Esophagus muscularis mucosa (tissue), 4 donors: ENCODE measurements at regions of chr3 and their contacts with region 1.

Region 1: DNA sequence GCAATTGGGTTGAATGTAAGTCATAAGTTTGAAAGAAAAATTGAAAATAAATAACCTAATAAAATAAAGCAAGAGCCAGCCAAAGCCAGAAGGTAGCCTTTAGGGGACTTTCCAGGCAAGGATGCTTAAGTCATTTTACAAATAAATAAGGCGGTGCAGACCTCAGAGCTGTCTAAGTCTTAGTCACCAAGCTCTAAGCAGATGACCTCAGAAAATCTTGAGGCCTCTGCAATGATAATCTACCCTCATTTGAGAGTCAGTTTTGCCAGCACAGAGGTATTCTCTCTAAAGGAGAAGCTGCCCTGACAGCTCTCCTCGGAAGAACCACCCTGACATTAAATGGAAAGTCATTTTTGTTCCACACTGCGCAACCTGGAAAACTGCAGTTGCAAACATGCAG is 113.9 kb downstream of the OXNAD1 start:
- DNase-seq: no peak
- H3K4me3 ChIP-seq: no peak overlapping the region
- H3K27ac ChIP-seq: peak overlapping the region; percentile 82 to 89 (median 84)
- H3K4me1 ChIP-seq: peaks cover 42 to 71% (median 55%) of the 10 kb centered on the region in 4 donors
- H3K27me3 ChIP-seq: no peaks in the 10 kb centered on the region
- CTCF ChIP-seq: no peak
- EP300 ChIP-seq: no peak
- POLR2A ChIP-seq: no peak

Region 2: GRCh38 chr3:16329036-16329825 is 49.7 kb before region 1 on chr3:
- intact Hi-C with region 1: no loop called
- DNase-seq: no peak
- H3K4me3 ChIP-seq: no peak overlapping the region
- H3K27ac ChIP-seq: peak overlapping the region; percentile 27 to 75 (median 72)
- H3K4me1 ChIP-seq: peaks cover 6 to 71% (median 46%) of the 10 kb centered on the region in 4 donors
- H3K27me3 ChIP-seq: no peaks in the 10 kb centered on the region
- CTCF ChIP-seq: no peak
- EP300 ChIP-seq: no peak
- POLR2A ChIP-seq: no peak

Region 3: DNA sequence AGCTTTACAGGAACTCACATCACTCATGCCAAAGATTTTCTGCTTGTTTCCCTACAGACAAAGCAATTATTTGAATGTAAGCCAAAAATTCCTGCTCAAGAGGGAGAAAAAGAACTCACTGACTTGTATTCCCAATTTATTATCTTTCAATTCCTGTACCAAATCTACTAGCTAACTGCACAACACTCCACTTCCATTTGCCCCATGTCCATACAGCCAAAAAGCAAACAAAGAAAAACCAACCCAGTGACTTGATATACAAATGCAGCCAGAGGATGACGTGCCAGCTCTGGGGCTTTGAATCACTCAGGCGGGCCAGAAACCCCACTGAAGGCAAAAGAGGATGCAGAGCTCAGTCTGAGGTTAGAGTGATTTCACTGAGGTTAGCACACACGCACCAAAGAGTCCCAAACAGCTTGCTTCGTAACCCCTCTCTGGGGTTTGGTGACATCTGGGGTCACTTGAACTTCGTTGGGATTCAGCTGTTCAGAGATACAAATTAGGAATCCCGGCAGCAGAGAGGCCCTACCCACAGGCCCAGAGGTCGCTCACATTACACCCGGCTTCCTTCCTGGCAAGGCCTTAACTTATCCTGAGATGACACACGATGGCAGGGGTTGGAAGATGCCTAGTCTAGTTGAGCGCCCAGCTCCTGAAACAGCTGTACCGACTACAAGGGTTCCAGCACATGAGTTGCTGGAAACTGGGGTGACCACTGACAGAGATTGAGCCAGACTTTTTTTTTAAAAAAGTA is 132.9 kb after region 1 on chr3:
- intact Hi-C with region 1: loop called (anchors 10 kb)
- DNase-seq: no peak
- H3K4me3 ChIP-seq: peak overlapping the region; percentile 82 to 95 (median 88)
- H3K27ac ChIP-seq: peak overlapping the region; percentile 90 to 94 (median 92)
- H3K4me1 ChIP-seq: peaks cover 60 to 88% (median 76%) of the 10 kb centered on the region in 4 donors
- H3K27me3 ChIP-seq: no peaks in the 10 kb centered on the region
- CTCF ChIP-seq: no peak
- EP300 ChIP-seq: peak; percentile 8
- POLR2A ChIP-seq: no peak